Motor neuron (in vitro differentiated cells): ENCODE measurements at regions of chr11 and their contacts with region 1.

Region 1: DNA sequence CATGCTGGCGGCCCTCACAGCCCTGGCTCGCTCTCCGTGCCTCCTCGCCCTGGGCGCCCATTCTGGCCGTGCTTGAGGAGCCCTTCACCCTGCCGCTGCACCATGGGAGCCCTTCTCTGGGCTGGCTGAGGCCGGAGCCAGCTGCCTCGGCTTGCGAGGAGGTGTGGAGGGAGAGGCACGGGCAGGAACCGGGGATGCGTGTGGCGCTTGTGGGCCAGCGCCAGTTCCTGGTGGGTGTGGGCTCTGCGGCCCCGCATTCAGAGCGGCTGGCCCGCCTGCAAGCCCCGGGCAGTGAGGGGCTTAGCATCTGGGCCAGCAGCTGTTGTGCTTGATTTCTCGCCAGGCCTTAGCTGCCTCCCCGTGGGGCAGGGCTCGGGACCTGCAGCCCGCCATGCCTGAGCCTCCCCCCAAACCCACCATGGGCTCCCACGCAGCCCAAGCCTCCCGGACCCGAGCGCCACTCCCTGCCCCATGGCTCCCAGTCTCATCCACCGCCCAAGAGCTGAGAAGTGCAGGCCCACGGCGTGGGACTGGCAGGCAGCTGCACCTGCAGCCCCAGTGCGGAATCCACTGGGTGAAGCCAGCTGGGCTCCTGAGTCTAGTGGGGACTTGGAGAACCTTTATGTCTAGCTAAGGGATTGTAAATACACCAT is 163.4 kb upstream of the LRRC4C start:
- ATAC-seq: no peak
- H3K4me3 ChIP-seq: no peak overlapping the region
- H3K27ac ChIP-seq: no peak overlapping the region
- H3K4me1 ChIP-seq: no peaks in the 10 kb centered on the region

Region 2: DNA sequence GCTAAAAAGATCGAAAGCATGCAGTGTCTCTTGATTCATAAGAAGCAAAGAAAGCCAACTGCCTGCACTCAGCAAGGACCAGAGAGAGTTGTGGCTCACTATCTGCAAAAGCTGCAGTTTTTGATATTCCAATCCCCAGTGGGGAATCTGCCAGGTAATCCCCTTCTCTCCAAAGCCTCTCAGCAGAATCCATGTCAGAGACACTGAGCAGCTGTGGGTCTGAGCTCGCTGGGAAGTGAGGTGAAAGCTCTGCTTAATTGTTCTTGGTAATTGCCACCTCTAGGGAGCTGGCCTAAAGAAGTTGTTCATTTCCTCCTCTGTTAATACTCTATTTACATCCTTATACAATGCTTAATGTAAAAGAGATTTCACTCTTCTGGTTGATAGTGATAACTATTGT is 97.9 kb after region 1 on chr11:
- in situ Hi-C with region 1: loop called in 1 of 9 experiments (anchors 25 kb)
- ATAC-seq: no peak
- H3K4me3 ChIP-seq: no peak overlapping the region
- H3K27ac ChIP-seq: no peak overlapping the region
- H3K4me1 ChIP-seq: no peaks in the 10 kb centered on the region